Cardiac septum (tissue), 1 donor: ENCODE measurements at regions of chr11 and their contacts with region 1.

Region 1: DNA sequence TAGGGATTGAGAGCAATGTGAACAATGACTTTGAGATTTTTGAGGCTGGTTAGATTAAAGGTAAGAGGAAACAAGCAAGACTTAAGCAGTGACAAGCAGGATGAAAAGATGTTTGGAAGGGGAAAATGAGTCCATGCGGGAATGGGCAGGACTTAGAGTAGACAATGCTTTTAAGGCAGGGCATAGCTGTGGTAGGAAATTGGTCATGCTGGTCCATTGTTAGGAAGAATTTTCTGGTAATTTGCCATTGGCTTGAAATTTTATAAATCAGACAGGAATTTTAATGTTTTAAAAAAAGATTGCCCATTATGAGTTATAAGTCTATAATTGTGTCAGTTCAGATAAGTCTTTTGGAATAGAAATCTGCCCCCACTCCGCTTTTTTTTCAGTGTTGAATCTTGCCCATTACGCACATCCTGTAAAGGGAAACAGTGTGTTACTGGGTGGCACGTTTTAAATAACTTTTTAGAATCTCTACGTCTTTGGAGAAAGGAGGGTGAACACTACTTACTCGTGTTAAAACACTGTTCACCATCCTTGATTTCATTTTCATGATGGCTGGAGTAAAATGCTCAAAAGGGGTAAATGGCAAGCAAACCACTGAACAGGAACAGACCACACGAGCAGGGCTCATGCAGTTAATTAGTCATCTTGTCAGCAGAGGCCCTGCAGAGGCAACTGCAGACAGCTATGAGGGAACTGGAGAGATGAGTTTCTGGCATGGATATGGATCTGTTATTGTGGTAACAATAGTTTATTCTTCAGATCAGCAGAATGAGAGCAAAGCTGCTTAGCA is 25.0 kb downstream of the SWAP70 start:
- DNase-seq: no peak

Region 2: DNA sequence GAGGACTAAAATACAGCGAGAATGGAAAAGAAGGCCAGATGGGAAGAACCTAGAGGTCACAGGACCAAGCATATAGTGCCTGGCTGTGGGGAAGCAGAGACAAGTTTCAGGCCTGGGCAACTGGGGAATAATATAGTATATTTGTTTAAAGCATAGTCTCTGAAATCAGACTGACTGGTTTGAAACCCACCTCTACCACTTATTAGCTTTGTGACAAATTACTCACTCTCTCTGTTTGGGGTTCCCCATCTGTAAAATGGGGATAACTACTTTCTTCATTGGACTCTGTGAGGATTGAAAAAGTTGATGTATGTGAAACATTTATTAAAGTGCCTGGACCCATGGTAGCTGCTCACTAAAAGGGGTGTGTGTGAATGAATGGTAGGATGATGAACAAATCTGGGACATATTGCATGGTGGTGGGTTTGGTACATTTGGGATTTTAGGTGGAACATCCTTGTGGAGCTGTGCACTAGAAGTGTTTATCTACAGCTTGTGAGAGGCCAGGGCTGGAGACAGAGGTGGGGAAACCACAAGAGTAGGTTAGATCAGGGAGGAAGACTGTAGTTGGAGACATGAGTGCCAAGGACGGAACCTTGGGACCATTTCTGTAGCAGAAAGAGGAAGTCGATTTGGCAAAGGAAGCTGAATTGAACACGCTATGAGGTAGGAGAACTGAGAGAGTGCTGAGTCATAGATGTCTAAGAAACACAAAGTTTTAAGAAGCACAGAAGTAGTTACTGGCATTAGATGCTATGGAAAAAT is 27.5 kb after region 1 on chr11:
- intact Hi-C with region 1: loop called (anchors 1 kb)
- DNase-seq: no peak